ENCODE measurements at regions of chr18 and their contacts with region 1.

Region 1: DNA sequence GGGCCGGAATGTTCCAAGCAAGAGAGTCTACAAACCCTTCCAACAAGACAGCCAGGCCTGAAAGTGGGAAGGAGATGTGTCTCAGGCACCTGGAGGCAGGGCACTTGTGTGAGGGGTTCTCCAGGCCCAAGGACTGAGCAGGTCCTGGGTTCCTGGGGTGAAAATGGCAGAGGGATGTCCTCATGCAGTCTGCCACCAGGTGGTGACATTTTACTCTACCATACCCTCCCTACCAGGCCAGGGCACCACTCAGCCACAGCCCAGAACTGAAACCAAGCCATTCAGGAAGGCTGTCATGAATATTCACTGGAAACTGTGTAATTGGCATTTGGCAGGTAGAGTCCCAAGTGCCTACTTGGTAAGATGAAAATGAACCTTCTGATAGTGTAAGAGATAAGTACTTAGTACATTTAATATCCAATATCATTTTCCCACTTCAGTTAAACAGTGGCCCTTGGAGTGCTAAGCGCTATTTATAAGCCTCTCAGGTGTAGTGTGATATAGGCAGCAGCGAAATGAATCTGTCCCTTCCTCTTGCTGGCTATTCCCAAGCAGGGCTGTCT is 185.1 kb downstream of the MYO5B start:
- DNase-seq: no peak
- ATAC-seq: peak; percentile 83

Region 2: DNA sequence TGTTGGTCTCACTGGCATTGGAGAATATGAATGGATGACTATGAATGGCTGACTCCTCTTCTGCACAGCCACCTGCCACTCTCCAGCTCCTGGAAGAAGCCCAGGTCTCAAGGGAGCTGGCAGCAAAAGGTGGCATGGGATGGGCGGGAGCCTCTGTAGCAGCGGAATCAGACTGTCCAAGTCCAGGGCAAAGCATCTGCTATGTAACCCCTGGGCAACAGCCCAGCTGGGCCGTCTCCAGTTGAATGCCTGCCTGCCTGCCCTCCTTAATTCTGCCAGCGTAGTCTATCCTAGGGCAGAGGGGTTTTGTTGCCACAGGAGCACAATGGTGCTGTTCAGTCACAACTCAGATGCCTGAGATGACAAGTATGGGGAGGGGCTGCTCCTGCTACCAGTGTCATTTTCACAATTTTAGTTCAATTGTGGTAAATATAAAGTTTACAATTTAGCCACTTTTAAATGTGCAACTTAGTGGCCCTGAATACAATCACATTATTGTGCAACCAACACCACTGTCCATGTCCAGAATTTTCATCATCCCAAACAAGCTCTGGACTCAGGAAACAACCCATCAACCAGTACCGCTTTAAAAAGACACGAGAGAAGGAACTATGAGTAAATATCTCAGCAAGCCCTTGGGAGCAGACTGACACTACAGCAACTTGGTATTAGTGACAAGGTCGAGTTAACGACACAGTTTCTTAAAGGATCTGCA is 69.9 kb after region 1 on chr18:
- intact Hi-C with region 1: no loop called
- DNase-seq: peak; percentile 87
- ATAC-seq: peak; percentile 97

Region 3: GRCh38 chr18:50203801-50204604 is 194.1 kb after region 1 on chr18:
- intact Hi-C with region 1: loop called (anchors 5 kb)
- DNase-seq: no peak
- ATAC-seq: peak; percentile 70

Measured in Right ventricle myocardium superior (tissue), 1 donor.